AG04449 (cell line): ENCODE measurements at regions of chr17 and their contacts with region 1.

Region 1: GRCh38 chr17:17919169-17920107 is 52.8 kb downstream of the TOM1L2 start:
- DNase-seq: no peak
- H3K4me3 ChIP-seq: no peak overlapping the region
- CTCF ChIP-seq: peak; percentile 79

Region 2: GRCh38 chr17:17877529-17878358 is 41.7 kb before region 1 on chr17:
- CTCF ChIA-PET with region 1: interaction called, 14 read pairs
- POLR2A ChIA-PET with region 1: no interaction called
- DNase-seq: peak; percentile 71
- H3K4me3 ChIP-seq: peak overlapping the region; percentile 13; the same call in 1 of the 2 replicates
- CTCF ChIP-seq: no peak

Region 3: DNA sequence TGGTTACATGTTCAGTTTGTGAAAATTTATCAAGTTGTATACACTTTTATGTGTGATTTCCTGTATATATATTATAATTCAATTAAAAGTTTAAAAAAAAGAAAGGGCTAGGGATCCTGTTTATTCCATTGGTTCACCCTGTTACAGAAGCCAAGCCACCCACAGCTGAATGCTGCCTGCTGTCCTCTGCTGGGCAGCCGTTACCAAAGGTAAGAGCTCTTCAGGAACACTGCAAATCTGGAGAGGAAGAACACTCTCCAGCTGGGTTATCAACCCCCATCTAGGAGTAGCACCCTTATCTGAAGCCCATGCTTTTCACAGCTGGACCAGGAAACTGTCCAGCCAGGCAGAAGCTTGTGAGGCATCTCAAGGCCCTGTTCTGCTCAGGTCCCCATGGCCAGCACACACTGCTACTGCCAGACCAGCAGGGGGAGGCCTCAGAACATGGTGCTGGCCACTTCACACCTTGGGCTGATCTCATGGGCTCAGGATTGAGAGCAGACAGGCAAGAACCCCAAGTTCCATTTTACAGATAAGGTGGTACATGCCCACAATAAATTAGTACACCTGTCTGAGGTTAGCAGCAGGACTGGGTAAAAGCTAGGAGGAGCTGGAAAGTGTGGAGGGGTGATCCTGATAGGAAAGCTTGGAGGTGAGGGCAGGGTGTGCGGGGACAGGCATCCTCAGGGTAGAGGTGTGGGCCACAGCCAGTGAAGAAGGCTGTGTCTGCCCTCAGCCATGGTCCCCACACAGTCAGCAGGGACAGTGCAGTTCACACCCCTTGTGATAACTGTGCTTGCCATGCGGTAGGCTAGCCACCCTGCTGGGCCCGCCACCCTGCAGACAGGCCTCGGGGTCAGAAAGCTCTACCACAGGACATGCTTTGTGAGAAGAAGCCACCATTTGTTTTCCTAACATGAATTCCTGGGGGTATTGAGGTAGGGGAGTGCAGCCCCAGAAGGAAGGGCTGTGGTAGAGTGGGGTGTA is 28.4 kb before region 1 on chr17:
- CTCF ChIA-PET with region 1: interaction called, 82 read pairs
- POLR2A ChIA-PET with region 1: no interaction called
- DNase-seq: no peak
- H3K4me3 ChIP-seq: no peak overlapping the region
- CTCF ChIP-seq: peak; percentile 91

Region 4: GRCh38 chr17:17906418-17907215 is 12.8 kb before region 1 on chr17:
- CTCF ChIA-PET with region 1: interaction called, 38 read pairs
- POLR2A ChIA-PET with region 1: interaction called, 9 read pairs
- DNase-seq: no peak
- H3K4me3 ChIP-seq: no peak overlapping the region
- CTCF ChIP-seq: no peak

Region 5: DNA sequence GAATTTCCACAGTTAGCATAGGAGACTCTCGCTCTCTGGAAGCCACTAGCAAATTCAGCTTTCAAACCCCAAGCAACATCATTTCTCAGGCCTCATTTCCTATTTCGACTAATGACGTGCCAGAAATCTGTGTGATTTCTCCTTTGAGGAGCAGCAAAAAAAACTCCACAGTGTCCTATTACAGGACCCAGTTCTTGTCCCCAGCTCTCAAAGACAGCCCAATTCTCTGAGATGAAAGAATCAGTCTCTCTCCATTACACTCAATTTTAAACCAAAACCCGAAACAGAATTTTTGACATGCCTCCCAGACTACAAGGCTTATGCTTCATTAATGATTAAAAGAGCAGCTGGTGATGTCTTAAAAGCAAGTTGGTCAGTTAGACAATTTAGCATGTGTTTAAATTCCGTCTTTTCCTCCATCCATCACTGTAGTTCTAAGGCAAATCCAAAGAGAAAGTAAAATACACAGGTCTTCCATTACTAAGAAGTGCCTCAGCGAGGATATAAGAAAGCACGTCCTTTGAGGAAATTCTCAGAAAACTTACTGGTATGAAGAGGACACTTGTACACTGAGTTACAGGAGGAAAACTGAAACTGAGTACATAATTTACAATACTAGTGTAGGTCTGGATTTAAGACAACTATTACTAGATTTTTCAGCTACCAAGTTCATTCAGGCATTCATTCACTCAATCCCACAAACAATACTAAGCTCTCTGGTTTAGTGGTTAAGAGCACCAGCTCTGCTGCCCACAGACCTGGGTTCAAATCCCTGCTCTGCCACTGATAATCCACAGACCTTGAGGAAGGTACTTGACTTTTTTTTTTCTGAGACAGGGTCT is 40.3 kb after region 1 on chr17:
- CTCF ChIA-PET with region 1: interaction called, 12 read pairs
- POLR2A ChIA-PET with region 1: no interaction called
- DNase-seq: no peak
- H3K4me3 ChIP-seq: peak overlapping the region; percentile 45
- CTCF ChIP-seq: no peak

Region 6: GRCh38 chr17:18166894-18167293 is 247.5 kb after region 1 on chr17:
- CTCF ChIA-PET with region 1: no interaction called
- POLR2A ChIA-PET with region 1: no interaction called
- DNase-seq: no peak
- H3K4me3 ChIP-seq: no peak overlapping the region
- CTCF ChIP-seq: no peak